ENCODE measurements at regions of chr7 and their contacts with region 1.

Region 1: GRCh38 chr7:90520484-90520883 is 51.0 kb downstream of the PTTG1IP2 start:
- DNase-seq: no peak
- H3K4me3 ChIP-seq: no peak overlapping the region
- H3K27ac ChIP-seq: no peak overlapping the region
- H3K4me1 ChIP-seq: no peaks in the 10 kb centered on the region
- H3K27me3 ChIP-seq: no peaks in the 10 kb centered on the region
- CTCF ChIP-seq: no peak
- EP300 ChIP-seq: no peak
- POLR2A ChIP-seq: no peak

Region 2: GRCh38 chr7:89607792-89608191 is 912.7 kb before region 1 on chr7:
- intact Hi-C with region 1: loop called in 1 of 4 experiments (anchors 5 kb)
- DNase-seq: no peak
- H3K4me3 ChIP-seq: no peak overlapping the region
- H3K27ac ChIP-seq: no peak overlapping the region
- H3K4me1 ChIP-seq: no peaks in the 10 kb centered on the region
- H3K27me3 ChIP-seq: no peaks in the 10 kb centered on the region
- CTCF ChIP-seq: no peak
- EP300 ChIP-seq: no peak
- POLR2A ChIP-seq: no peak

Measured in ovary (tissue), 10 donors.